Adrenal gland (tissue), 19 donors: ENCODE measurements at regions of chr2 and their contacts with region 1.

Region 1: GRCh38 chr2:237739101-237739500 is 59.5 kb upstream of the RBM44 start:
- DNase-seq: peak; percentile 59 to 79 (median 76)
- H3K4me3 ChIP-seq: no peak overlapping the region
- H3K27ac ChIP-seq: peak overlapping the region in 3 of 5 donors; percentile 45 to 57 (median 48)
- H3K4me1 ChIP-seq: peaks cover 13 to 43% of the 10 kb centered on the region in 2 donors
- H3K27me3 ChIP-seq: no peaks in the 10 kb centered on the region
- CTCF ChIP-seq: peak in 2 of 6 experiments; percentile 19
- POLR2A ChIP-seq: no peak

Region 2: DNA sequence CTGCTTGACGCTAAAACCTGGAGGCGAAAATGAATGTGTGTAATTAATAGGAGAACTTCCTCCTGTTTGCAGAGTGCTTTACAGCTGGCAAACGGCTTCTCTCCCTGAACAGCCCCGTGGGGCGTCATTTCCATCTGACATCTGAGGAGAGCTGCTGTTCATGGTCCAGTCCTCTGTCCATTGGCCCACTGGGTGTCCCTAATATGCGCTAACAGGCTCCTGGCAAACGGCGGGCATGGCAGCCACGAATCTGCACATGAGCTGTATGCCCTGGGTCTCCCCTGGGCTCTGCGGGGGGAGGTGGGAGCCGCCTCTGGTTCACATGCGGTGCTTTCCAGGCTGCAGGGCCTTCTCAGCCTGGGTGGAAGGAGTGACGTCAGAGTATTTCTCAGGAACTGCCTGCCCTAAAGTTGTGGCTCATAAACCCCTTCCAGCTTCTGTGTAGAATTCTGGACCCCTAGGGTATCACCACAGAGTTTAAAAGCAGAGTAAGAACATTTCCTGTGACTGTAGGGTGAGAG is 38.5 kb before region 1 on chr2:
- intact Hi-C with region 1: loop called in 1 of 2 experiments (anchors 5 kb)
- DNase-seq: peak in 2 of 7 donors; percentile 28 to 75
- H3K4me3 ChIP-seq: no peak overlapping the region
- H3K27ac ChIP-seq: peak overlapping the region in 2 of 5 donors; percentile 65 to 82
- H3K4me1 ChIP-seq: peaks cover 55 to 100% of the 10 kb centered on the region in 2 donors
- H3K27me3 ChIP-seq: no peaks in the 10 kb centered on the region
- CTCF ChIP-seq: no peak
- POLR2A ChIP-seq: no peak

Region 3: DNA sequence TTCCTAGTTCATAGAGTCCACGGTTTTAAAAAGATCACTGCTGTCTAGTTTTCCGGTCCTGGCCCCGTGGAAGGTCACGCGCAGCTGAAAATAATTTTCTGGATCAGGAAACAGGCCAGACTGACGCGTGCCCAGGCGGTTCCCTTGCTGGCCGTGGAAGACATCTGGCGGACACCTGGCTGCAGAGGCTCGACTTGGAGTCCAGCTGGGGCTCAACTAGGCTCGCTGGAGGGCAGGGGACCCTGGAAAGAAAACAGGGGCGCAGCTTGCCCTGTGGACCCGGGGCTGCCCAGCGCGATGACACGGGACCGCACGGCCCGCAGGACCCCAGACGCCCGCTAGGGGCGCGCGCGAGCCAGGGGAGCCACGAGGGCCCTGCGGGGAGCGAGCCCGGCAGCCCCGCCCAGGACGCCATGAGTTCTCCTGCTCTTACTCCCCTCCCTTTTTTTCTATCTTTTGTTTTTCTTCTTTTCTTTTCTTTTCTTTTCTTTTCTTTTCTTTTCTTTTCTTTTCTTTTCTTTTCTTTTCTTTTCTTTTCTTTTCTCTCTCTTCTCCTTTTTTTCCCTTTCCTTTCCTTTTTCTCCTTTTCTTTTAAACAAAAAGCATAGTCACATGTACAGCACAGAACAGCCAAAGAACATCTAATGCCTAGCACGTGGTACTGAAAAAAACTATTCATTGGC is 184.5 kb after region 1 on chr2:
- intact Hi-C with region 1: no loop called
- DNase-seq: peak; percentile 63 to 83 (median 80)
- H3K4me3 ChIP-seq: peak overlapping the region in 1 of 4 donors; percentile 32
- H3K27ac ChIP-seq: peak overlapping the region in 2 of 5 donors; percentile 50 to 52
- H3K4me1 ChIP-seq: peaks cover 0 to 9% of the 10 kb centered on the region in 2 donors
- H3K27me3 ChIP-seq: no peaks in the 10 kb centered on the region
- CTCF ChIP-seq: peak; percentile 85 to 100 (median 94)
- POLR2A ChIP-seq: no peak